K562 (cell line): ENCODE measurements at regions of chr3 and their contacts with region 1.

Region 1: DNA sequence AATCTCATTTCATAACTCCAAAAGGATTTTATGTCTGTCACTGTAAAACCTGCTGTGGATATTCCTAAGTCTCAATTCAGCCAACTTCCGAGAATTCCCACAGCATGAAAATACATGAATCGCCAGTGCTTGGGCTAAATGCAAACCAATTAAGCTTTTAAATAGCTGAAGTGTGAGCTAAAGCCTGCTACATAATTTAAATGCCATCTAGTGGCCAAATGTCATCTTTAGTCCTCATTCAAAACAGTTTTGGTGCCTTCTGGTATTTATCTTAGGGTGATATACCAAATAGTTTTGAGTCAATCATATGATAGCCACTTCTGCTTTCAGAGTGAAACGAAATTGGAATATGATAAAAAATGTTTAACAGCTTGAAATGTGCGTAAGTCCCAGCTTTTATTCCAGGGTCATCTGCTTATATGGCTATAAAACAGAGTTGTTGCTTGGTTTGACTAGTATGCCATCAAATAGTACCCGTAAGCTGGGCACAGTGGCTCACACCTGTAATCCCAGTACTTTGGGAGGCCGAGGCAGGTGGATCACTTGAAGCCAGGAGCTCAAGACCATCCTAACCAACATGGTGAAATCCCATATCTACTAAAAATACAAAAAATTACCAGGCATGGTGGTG is 41.8 kb upstream of the CCNL1 start:
- DNase-seq: peak; percentile 40 to 55 (median 50)
- ATAC-seq: peak; percentile 90
- H3K4me3 ChIP-seq: no peak overlapping the region
- H3K27ac ChIP-seq: no peak overlapping the region
- H3K4me1 ChIP-seq: no peaks in the 10 kb centered on the region
- H3K27me3 ChIP-seq: peaks cover 0 to 7% of the 10 kb centered on the region in 2 experiments; a peak in 2 of 5 replicates
- CTCF ChIP-seq: peak; percentile 40 to 84 (median 50); a peak in 5 of 6 replicates
- EP300 ChIP-seq: no peak
- POLR2A ChIP-seq: no peak
- RAD21 ChIP-seq: peak; percentile 80 to 88

Region 2: DNA sequence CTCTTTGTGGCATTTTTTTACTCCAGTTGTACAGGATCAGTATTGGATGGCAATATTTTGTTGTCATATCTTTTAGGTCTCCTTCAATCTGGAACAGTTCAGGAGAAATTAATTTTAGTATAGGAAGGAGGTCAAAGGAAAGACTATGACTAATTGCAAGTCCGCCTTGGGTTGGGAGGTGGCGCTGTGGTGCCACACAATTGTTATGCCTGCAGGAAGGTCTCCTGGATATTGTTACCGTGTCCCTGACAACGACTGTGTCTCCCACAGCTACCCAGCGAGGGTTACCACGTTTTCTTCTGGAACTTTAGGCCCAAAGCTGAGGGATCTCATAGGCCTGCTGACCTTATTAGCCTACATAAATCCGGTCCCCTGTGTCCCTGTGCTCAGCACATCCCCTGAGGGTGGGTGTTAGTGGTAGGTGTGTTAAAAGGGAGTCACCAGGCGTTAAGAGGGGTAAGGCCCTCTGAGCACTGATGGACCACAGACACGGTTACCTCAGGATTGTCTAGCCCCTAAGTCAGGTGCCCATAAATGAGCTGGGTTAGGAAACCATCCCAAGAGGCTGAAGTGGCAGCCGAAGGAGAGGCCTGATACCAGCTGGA is 1049.8 kb before region 1 on chr3:
- CTCF ChIA-PET with region 1: interaction called, 7 read pairs
- POLR2A ChIA-PET with region 1: no interaction called
- in situ Hi-C with region 1: no loop called
- intact Hi-C with region 1: loop called (anchors 10 kb)
- DNase-seq: peak; percentile 35 to 69 (median 49)
- ATAC-seq: peak; percentile 91
- H3K4me3 ChIP-seq: no peak overlapping the region
- H3K27ac ChIP-seq: no peak overlapping the region
- H3K4me1 ChIP-seq: peaks cover 0 to 7% of the 10 kb centered on the region in 2 experiments; a peak in 2 of 5 replicates
- H3K27me3 ChIP-seq: peaks cover 2 to 4% of the 10 kb centered on the region in 2 experiments; a peak in 2 of 5 replicates
- CTCF ChIP-seq: peak; percentile 79 to 92 (median 91)
- EP300 ChIP-seq: no peak
- POLR2A ChIP-seq: no peak
- RAD21 ChIP-seq: peak; percentile 67 to 85

Region 3: DNA sequence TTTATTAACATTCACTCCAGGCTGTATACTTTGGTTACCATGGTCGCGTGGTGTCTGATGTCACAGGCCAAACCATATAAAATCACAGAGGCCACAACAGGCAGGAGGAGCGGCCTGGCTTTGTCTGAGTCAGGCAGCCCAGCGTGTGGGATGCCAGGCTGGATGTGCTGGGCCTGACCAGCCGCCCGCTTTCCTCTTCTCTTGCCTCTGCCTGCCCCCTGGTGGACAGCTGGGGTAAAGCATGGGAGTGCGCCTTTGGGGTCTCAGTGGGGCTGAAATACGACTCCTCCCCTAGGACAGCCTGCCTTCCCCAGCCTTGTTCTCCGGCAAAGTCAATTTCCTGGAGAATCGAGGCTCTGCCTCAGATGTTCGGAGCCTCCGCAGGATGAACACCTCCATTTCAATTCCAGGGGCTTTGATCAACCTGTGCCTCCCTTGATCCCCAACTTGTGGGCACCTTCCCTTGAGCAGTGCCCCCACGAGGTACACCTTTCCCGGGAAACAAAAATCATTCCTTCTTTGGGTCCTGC is 120.0 kb before region 1 on chr3:
- CTCF ChIA-PET with region 1: no interaction called
- POLR2A ChIA-PET with region 1: no interaction called
- in situ Hi-C with region 1: no loop called
- intact Hi-C with region 1: no loop called
- DNase-seq: peak; percentile 80 to 87 (median 86)
- ATAC-seq: peak; percentile 95
- H3K4me3 ChIP-seq: no peak overlapping the region
- H3K27ac ChIP-seq: no peak overlapping the region
- H3K4me1 ChIP-seq: peaks cover 11 to 13% of the 10 kb centered on the region in 2 experiments; a peak in 4 of 5 replicates
- H3K27me3 ChIP-seq: no peaks in the 10 kb centered on the region
- CTCF ChIP-seq: peak; percentile 86 to 96 (median 91)
- EP300 ChIP-seq: no peak
- POLR2A ChIP-seq: no peak
- RAD21 ChIP-seq: peak; percentile 96 to 97

Region 4: DNA sequence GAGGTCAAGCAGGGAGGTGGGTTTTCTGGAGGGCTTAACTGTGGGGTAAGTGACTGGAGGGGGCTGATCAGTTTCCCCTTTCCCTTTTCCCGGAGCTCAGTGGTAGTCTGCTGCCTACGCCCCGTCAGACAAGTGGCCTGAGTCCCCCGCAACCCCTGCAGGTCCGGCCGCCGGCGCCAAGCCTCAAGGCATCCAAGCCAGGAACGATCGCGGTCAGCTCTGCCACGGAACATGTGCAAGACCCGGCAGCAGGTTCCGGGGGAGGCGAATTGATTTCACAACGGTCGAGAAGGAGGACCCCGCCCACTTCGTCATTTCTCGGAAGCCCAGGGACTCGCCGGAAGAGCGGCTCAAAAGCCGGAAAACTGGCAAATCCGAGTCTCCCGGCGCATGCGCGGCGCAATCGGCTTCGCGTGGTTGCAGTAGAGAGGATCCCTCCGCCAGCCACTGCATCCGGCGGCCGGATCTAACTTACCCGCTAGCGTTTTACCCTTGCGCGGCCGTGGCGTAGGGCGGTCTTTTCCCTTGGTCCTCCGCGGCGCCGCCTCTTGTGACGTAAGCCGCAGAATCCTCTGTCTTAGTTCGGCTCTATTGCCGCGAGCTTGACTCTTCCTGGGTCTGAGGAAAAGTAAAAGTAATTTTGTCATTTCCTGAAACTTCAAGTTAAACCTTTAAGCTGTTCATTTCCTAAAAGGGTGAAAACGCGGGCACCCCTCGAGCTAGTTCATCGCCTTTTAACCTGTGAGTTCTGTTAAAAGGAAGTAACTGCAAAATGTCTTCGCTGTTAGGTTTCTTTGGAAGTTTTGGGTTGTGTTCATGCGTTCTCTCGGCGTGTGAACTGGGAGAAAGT is 26.9 kb before region 1 on chr3:
- CTCF ChIA-PET with region 1: no interaction called
- POLR2A ChIA-PET with region 1: interaction called, 8 read pairs
- in situ Hi-C with region 1: no loop called
- intact Hi-C with region 1: loop called (anchors 1 kb)
- DNase-seq: peak; percentile 91 to 99 (median 92)
- ATAC-seq: peak; percentile 88
- H3K4me3 ChIP-seq: peak overlapping the region; percentile 67
- H3K27ac ChIP-seq: peak overlapping the region; percentile 97
- H3K4me1 ChIP-seq: peaks cover 14 to 17% of the 10 kb centered on the region in 2 experiments
- H3K27me3 ChIP-seq: no peaks in the 10 kb centered on the region
- CTCF ChIP-seq: no peak
- EP300 ChIP-seq: peak; percentile 70
- POLR2A ChIP-seq: peak; percentile 98
- RAD21 ChIP-seq: no peak

Region 5: DNA sequence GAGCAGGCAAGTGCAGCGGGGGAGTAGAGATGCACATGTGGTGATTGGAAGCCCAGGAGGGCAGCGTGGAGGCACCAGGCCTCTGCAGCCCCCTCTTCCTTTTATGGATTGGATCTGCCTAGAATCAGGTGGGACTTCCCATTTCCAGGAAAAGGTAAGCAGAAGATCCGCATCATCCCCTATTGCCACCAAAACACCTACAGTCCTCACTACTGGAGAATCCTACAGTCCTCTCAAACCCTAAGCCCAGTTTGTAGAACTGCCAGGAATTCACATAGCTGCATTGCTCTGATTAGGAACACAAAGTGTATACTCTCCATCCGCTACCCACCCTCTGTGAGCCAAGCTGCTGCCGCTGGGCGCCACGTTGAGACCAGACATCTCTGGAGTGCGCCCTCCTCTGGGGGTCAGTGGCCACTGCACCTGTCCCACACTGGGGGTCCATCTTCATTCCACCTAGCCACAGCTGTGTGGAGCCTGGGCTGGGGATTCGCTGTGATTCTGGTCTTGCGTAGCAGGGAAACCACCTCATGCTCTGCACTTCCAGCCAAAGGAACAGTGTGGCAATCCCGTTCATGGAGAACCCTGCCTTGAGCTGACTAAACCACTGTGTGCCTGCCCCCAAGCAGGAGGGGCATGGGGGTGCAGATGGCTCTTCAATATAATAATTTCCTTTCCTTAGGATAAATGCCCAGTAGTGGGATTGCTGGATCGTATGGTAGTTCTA is 146.0 kb after region 1 on chr3:
- CTCF ChIA-PET with region 1: interaction called, 4 read pairs
- POLR2A ChIA-PET with region 1: no interaction called
- in situ Hi-C with region 1: no loop called
- intact Hi-C with region 1: loop called (anchors 2 kb)
- DNase-seq: peak; percentile 34 to 51 (median 38)
- ATAC-seq: peak; percentile 97
- H3K4me3 ChIP-seq: no peak overlapping the region
- H3K27ac ChIP-seq: no peak overlapping the region
- H3K4me1 ChIP-seq: no peaks in the 10 kb centered on the region
- H3K27me3 ChIP-seq: no peaks in the 10 kb centered on the region
- CTCF ChIP-seq: peak; percentile 66 to 90 (median 78)
- EP300 ChIP-seq: no peak
- POLR2A ChIP-seq: no peak
- RAD21 ChIP-seq: peak; percentile 43 to 73

Region 6: GRCh38 chr3:157493627-157494550 is 292.1 kb after region 1 on chr3:
- CTCF ChIA-PET with region 1: interaction called, 16 read pairs
- POLR2A ChIA-PET with region 1: no interaction called
- in situ Hi-C with region 1: loop called (anchors 5 kb)
- intact Hi-C with region 1: loop called (anchors 1 kb)
- DNase-seq: peak; percentile 14 to 52 (median 16)
- ATAC-seq: peak; percentile 45; the same call in 1 of the 3 replicates
- H3K4me3 ChIP-seq: no peak overlapping the region
- H3K27ac ChIP-seq: no peak overlapping the region
- H3K4me1 ChIP-seq: no peaks in the 10 kb centered on the region
- H3K27me3 ChIP-seq: no peaks in the 10 kb centered on the region; a peak in 1 of 5 replicates
- CTCF ChIP-seq: peak; percentile 45 to 72 (median 53); a peak in 5 of 6 replicates
- EP300 ChIP-seq: no peak
- POLR2A ChIP-seq: no peak
- RAD21 ChIP-seq: peak; percentile 80 to 84